Transverse colon (tissue), 4 donors: ENCODE measurements at regions of chr11 and their contacts with region 1.

Region 1: GRCh38 chr11:20387241-20388095 is at the start of gene PRMT3:
- DNase-seq: peak; percentile 97
- H3K4me3 ChIP-seq: peak within 1 kb of the TSS; percentile 62 to 95 (median 76)
- H3K27ac ChIP-seq: peak within 1 kb of the TSS; percentile 89 to 93 (median 92)
- H3K4me1 ChIP-seq: peaks cover 0 to 17% (median 11%) of the 10 kb centered on the region in 4 donors
- H3K27me3 ChIP-seq: no peaks in the 10 kb centered on the region
- CTCF ChIP-seq: peak; percentile 95 to 100 (median 98)
- EP300 ChIP-seq: no peak
- POLR2A ChIP-seq: peak; percentile 94
- total RNA-seq, gene PRMT3: 6.7 to 21.0 (median 15.2) TPM

Region 2: GRCh38 chr11:19970944-19971343 is 416.5 kb before region 1 on chr11:
- in situ Hi-C with region 1: no loop called
- intact Hi-C with region 1: no loop called
- DNase-seq: no peak
- H3K4me3 ChIP-seq: no peak overlapping the region
- H3K27ac ChIP-seq: no peak overlapping the region
- H3K4me1 ChIP-seq: no peaks in the 10 kb centered on the region
- H3K27me3 ChIP-seq: no peaks in the 10 kb centered on the region
- CTCF ChIP-seq: no peak
- EP300 ChIP-seq: no peak
- POLR2A ChIP-seq: no peak

Region 3: DNA sequence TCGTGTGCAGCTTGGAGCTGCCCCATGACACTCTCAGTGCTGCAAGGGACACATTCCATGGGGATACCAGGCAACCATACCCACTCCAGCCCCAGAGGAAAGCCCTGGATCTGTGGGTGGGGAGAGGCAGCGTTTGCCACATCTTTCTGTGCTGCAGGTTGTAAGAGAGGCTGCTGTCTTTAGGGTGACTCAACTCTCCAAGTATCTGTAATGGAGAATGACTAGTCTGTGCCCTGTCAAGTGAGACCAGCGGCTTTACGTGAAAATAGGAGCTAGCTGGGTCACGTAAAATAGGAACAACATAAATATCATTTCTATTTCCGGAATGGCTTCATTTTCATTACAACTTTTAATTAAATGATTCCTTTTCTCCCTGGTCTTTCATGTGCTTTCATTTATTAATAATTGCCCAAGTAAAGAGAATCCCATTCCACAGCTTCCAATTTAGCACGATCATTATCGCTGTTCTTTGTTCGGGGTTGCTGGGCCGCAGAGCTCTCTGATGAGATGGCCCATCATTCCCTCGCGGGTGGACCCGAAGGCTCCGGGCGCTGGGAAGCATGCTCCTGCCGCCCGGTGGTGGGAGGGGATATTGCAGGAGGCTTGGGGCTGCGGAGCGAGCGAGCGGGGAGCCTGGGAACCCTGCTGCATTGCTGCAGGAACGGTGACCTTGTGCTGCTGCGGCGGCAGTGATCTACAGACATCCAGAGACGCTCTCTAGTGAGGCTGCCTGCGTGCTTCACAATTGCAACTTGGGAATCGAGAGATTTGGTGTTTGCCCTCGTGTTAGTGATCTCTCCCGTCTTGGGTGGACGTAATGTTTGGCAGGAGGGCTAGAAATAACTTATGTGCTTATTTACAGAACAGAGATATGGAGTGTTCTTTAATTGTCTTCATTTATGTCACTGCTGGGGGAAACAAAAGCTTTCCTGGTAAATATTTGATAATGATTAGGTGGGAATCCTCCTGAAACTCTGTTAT is 222.5 kb after region 1 on chr11:
- in situ Hi-C with region 1: loop called in 3 of 4 experiments (anchors 25 kb)
- intact Hi-C with region 1: no loop called
- DNase-seq: peak; percentile 62
- H3K4me3 ChIP-seq: no peak overlapping the region
- H3K27ac ChIP-seq: no peak overlapping the region
- H3K4me1 ChIP-seq: peaks cover 0 to 6% (median 0%) of the 10 kb centered on the region in 4 donors
- H3K27me3 ChIP-seq: peaks cover 67% of the 10 kb centered on the region
- CTCF ChIP-seq: peak; percentile 66 to 90 (median 86)
- EP300 ChIP-seq: no peak
- POLR2A ChIP-seq: no peak